ENCODE measurements at regions of chr6 and their contacts with region 1.

Region 1: DNA sequence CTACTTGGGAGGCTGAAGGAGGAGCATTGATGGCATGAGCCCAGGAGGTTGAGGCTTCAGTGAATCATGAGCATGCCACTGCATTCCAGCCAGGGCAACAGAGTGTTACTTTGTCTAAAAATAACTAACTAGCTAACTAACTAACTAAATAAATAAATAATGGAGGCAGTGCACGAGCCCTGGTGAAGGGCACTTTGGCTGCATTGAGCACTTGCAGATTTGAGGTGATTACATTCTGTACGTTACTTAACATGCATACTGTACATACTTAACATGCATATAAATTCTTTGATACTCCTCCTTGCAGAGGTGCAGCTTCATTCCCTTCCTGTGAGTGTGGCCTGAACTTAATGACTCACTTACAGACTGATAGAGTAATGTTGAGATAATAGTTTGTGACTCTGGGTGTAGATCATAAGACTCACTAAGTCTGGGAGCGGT is 10.7 kb downstream of the HLA-A start:
- DNase-seq: no peak
- H3K4me3 ChIP-seq: no peak overlapping the region
- H3K27ac ChIP-seq: no peak overlapping the region
- H3K4me1 ChIP-seq: no peaks in the 10 kb centered on the region
- H3K27me3 ChIP-seq: no peaks in the 10 kb centered on the region
- CTCF ChIP-seq: no peak

Region 2: DNA sequence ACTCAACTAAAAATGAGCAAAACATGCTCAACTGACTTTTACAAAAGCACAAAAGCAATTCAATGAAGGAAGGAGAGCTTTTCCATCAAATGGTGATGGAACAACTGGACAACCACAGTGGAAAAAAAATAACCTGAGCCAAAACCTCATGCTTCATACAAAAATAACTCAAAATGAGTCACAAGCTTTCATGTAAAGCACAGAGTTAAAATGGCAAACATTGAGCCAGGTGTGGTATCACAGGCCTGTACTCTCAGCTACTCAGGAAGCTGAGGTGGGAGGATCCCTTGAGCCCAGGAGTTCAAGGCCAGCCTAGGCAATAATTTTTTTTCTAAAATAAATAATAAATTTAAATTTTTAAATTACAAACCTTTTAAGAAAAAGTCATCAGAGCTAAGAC is 143.8 kb before region 1 on chr6:
- CTCF ChIA-PET with region 1: no interaction called
- POLR2A ChIA-PET with region 1: no interaction called
- intact Hi-C with region 1: no loop called
- DNase-seq: no peak
- H3K4me3 ChIP-seq: no peak overlapping the region
- H3K27ac ChIP-seq: no peak overlapping the region
- H3K4me1 ChIP-seq: no peaks in the 10 kb centered on the region
- H3K27me3 ChIP-seq: peaks cover 49% of the 10 kb centered on the region
- CTCF ChIP-seq: no peak

Region 3: GRCh38 chr6:29850011-29850553 is 102.9 kb before region 1 on chr6:
- CTCF ChIA-PET with region 1: no interaction called
- POLR2A ChIA-PET with region 1: no interaction called
- intact Hi-C with region 1: no loop called
- DNase-seq: no peak
- H3K4me3 ChIP-seq: no peak overlapping the region
- H3K27ac ChIP-seq: no peak overlapping the region
- H3K4me1 ChIP-seq: no peaks in the 10 kb centered on the region
- H3K27me3 ChIP-seq: peaks cover 59% of the 10 kb centered on the region
- CTCF ChIP-seq: no peak

Region 4: DNA sequence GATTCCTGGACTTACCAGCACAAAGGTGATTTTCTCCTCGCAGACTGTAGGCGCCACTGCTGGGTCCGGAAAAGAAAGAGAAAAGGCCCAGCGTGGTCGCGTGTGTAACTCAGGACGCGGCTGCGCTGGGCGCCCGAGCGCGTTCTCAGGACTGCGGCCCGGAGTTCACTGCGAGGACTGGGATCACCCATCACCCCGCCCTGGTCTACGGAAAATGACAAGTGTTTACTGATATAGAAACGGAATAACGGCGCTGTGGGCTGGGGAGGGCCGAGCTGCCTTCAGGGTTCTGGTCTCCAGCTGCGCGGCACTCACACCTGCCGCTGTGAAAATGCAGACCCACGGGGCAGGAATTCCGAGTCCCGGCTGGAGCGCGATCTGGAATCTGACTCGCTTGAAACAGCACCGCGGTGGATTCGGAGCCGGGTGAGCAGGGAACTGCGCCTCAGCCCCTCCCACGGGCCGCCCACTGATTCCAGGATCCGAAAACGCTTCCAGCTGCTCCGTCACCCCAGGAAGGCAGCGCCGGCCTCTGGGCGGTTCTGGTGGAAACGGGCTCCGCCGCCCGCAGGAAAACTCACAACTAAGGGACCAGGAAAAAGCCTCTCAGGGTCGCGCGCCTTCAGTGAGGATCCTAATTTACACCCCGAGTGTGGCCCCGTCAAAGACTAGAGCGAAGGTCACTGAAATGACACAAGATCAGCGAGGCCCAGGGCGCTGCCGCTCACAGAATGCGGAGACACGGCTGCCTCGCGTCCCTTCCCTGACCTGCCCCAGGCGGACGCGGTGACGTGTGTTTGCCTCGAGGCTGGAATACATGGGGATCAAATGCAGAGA is 23.8 kb after region 1 on chr6:
- CTCF ChIA-PET with region 1: no interaction called
- POLR2A ChIA-PET with region 1: no interaction called
- intact Hi-C with region 1: loop called (anchors 2 kb)
- DNase-seq: peak; percentile 75
- H3K4me3 ChIP-seq: peak overlapping the region; percentile 49
- H3K27ac ChIP-seq: peak overlapping the region; percentile 9
- H3K4me1 ChIP-seq: no peaks in the 10 kb centered on the region
- H3K27me3 ChIP-seq: no peaks in the 10 kb centered on the region
- CTCF ChIP-seq: peak; percentile 41

Measured in A673 (cell line).